ENCODE measurements at regions of chr16 and their contacts with region 1.

Region 1: DNA sequence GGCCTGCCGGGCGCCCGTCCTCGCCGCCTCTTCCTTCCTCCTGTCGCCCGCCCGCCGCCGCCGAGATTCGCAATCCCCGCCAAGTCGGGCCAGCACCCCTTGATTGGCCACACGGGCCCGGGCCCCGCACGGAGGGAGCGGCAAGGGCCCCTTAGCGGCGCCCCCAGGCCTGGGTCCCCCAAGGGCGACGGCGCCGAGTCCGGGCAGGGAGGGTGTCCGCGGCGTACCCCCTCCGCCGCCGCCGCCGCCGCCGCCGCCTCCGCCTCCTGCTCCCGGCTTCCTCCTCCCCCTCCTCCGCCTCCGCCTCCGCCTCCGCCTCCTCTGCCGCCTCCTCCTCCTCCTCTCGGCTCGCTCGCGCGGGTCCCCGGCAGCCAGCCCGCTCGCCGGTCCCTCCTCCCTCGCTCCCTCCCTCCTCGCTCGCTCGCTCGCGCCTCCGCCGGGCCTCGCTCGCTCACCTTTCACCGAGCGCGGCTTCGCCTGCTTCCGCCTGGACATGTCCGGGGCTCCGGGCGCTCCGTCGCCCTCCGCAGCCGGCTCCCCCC is 561 bp downstream of the ZNF423 start:
- DNase-seq: peak; percentile 87 to 89
- H3K4me3 ChIP-seq: peak overlapping the region; percentile 50 to 75
- H3K27ac ChIP-seq: peak overlapping the region; percentile 88 to 98
- H3K4me1 ChIP-seq: peaks cover 0 to 17% of the 10 kb centered on the region in 2 donors
- H3K27me3 ChIP-seq: no peaks in the 10 kb centered on the region
- CTCF ChIP-seq: peak in 1 of 4 experiments; percentile 17
- POLR2A ChIP-seq: peak; percentile 43 to 81

Region 2: DNA sequence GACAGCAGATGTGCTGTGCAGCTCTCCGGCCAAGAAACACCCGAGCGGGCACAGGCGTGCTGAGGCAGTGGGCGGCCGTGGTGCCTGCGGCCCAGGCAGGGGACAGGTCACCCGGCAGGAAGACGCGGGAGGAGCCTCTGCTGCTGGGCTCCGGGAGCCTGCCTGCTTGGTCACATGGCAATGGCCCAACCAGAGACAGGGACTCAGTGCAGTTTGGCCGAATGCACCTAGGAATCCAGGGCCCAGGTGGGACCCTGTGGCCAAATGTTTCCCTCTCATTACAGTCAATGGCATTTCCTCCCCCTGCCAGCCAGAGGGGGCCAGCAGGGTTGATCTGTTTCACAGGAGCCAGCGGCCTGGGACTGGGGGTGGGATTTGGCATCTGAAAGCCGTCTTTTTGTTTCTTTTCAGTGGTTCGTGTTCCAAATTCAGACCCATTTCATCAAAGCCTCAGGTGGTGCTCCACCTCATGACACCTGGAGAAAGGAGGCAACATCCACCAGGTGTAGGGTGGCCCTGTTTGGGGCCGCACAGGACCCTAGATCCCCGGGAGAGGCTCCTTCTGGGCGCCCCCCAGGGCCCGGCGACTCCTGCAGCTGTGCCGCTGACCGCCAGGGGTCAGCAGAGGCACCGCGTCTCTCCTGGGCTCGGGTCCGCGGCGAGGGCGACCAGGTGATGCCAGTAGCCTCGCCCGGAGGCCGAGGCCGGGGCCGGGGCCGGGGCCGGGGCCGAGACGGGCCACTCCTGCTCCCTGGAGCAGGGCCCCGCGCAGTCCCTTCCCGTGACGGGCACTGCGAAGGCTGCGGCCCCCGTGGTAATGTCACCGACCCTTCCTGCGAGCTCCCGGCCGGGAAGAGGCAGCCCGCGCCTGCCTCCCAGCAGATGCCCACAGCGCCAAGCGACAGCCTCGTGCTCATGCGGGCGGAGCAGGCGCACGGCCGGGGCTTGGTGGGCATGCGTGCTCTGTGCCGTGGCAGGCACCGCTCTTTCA is 363.3 kb before region 1 on chr16:
- intact Hi-C with region 1: loop called (anchors 10 kb)
- DNase-seq: peak; percentile 46 to 64
- H3K4me3 ChIP-seq: peak overlapping the region in 1 of 2 donors; percentile 21
- H3K27ac ChIP-seq: peak overlapping the region in 1 of 2 donors; percentile 7
- H3K4me1 ChIP-seq: no peaks in the 10 kb centered on the region
- H3K27me3 ChIP-seq: no peaks in the 10 kb centered on the region
- CTCF ChIP-seq: peak; percentile 86 to 96 (median 88)
- POLR2A ChIP-seq: no peak

Measured in uterus (tissue), 4 donors.